Activated naive CD4-positive, alpha-beta T cell treated with anti-CD3 and anti-CD28 coated beads, Interleukin-2, amount 10 ng/mL, durations not matched to agents 7 days and 5 days (primary cell): ENCODE measurements at regions of chr3 and their contacts with region 1.

Region 1: GRCh38 chr3:50971487-50971924 is 296.8 kb downstream of the DOCK3 start:
- DNase-seq: peak; percentile 70
- H3K4me3 Mint-ChIP-seq: no peak overlapping the region
- H3K27ac Mint-ChIP-seq: no peak overlapping the region
- H3K4me1 Mint-ChIP-seq: peaks cover 14% of the 10 kb centered on the region
- H3K27me3 Mint-ChIP-seq: peaks cover 4% of the 10 kb centered on the region

Region 2: GRCh38 chr3:50913260-50913659 is 58.2 kb before region 1 on chr3:
- CTCF ChIA-PET with region 1: no interaction called
- DNase-seq: no peak
- H3K4me3 Mint-ChIP-seq: no peak overlapping the region
- H3K27ac Mint-ChIP-seq: no peak overlapping the region
- H3K4me1 Mint-ChIP-seq: no peaks in the 10 kb centered on the region
- H3K27me3 Mint-ChIP-seq: peaks cover 8% of the 10 kb centered on the region

Region 3: GRCh38 chr3:51024765-51025632 is 53.5 kb after region 1 on chr3:
- CTCF ChIA-PET with region 1: interaction called, 10 read pairs
- DNase-seq: peak; percentile 88
- H3K4me3 Mint-ChIP-seq: peak overlapping the region; percentile 53
- H3K27ac Mint-ChIP-seq: peak overlapping the region; percentile 96
- H3K4me1 Mint-ChIP-seq: peaks cover 33% of the 10 kb centered on the region
- H3K27me3 Mint-ChIP-seq: no peaks in the 10 kb centered on the region

Region 4: GRCh38 chr3:51371943-51372557 is 400.5 kb after region 1 on chr3:
- CTCF ChIA-PET with region 1: interaction called, 30 read pairs
- DNase-seq: peak; percentile 72
- H3K4me3 Mint-ChIP-seq: no peak overlapping the region
- H3K27ac Mint-ChIP-seq: no peak overlapping the region
- H3K4me1 Mint-ChIP-seq: no peaks in the 10 kb centered on the region
- H3K27me3 Mint-ChIP-seq: peaks cover 9% of the 10 kb centered on the region